Sigmoid colon (tissue), 7 donors: ENCODE measurements at regions of chr4 and their contacts with region 1.

Region 1: GRCh38 chr4:118968005-118968404 is 79.4 kb downstream of the SYNPO2 start:
- DNase-seq: peak; percentile 89
- H3K4me3 ChIP-seq: peak overlapping the region in 2 of 4 donors; percentile 2 to 23
- H3K27ac ChIP-seq: peak overlapping the region; percentile 82 to 90 (median 86)
- H3K4me1 ChIP-seq: peaks cover 0 to 99% (median 93%) of the 10 kb centered on the region in 4 donors
- H3K27me3 ChIP-seq: no peaks in the 10 kb centered on the region
- CTCF ChIP-seq: no peak
- EP300 ChIP-seq: no peak
- POLR2A ChIP-seq: no peak

Region 2: GRCh38 chr4:118676128-118676527 is 291.9 kb before region 1 on chr4:
- intact Hi-C with region 1: no loop called
- DNase-seq: no peak
- H3K4me3 ChIP-seq: no peak overlapping the region
- H3K27ac ChIP-seq: no peak overlapping the region
- H3K4me1 ChIP-seq: no peaks in the 10 kb centered on the region
- H3K27me3 ChIP-seq: no peaks in the 10 kb centered on the region
- CTCF ChIP-seq: no peak
- EP300 ChIP-seq: no peak
- POLR2A ChIP-seq: no peak

Region 3: GRCh38 chr4:118740869-118741268 is 227.1 kb before region 1 on chr4:
- intact Hi-C with region 1: loop called (anchors 2 kb)
- DNase-seq: no peak
- H3K4me3 ChIP-seq: peak overlapping the region; percentile 11 to 21 (median 16)
- H3K27ac ChIP-seq: peak overlapping the region; percentile 48 to 88 (median 85)
- H3K4me1 ChIP-seq: peaks cover 0 to 93% (median 56%) of the 10 kb centered on the region in 4 donors
- H3K27me3 ChIP-seq: no peaks in the 10 kb centered on the region
- CTCF ChIP-seq: peak in 2 of 4 experiments; percentile 20 to 47
- EP300 ChIP-seq: no peak
- POLR2A ChIP-seq: no peak

Region 4: GRCh38 chr4:118772081-118772766 is 195.8 kb before region 1 on chr4:
- intact Hi-C with region 1: loop called (anchors 2 kb)
- DNase-seq: no peak
- H3K4me3 ChIP-seq: peak overlapping the region in 3 of 4 donors; percentile 10 to 28 (median 22)
- H3K27ac ChIP-seq: peak overlapping the region; percentile 83 to 88 (median 85)
- H3K4me1 ChIP-seq: peaks cover 0 to 68% (median 51%) of the 10 kb centered on the region in 4 donors
- H3K27me3 ChIP-seq: no peaks in the 10 kb centered on the region
- CTCF ChIP-seq: peak; percentile 47 to 68 (median 64)
- EP300 ChIP-seq: no peak
- POLR2A ChIP-seq: no peak

Region 5: GRCh38 chr4:118835571-118836300 is 132.3 kb before region 1 on chr4 and contains the start of gene SEC24D:
- intact Hi-C with region 1: loop called (anchors 2 kb)
- DNase-seq: peak; percentile 95
- H3K4me3 ChIP-seq: peak within 1 kb of the TSS; percentile 83 to 93 (median 89)
- H3K27ac ChIP-seq: peak within 1 kb of the TSS; percentile 96 to 98 (median 98)
- H3K4me1 ChIP-seq: peaks cover 0 to 37% (median 26%) of the 10 kb centered on the region in 4 donors
- H3K27me3 ChIP-seq: no peaks in the 10 kb centered on the region
- CTCF ChIP-seq: no peak
- EP300 ChIP-seq: no peak
- POLR2A ChIP-seq: peak; percentile 59 to 61
- total RNA-seq, gene SEC24D: 27.6 to 42.4 (median 33.4) TPM

Region 6: DNA sequence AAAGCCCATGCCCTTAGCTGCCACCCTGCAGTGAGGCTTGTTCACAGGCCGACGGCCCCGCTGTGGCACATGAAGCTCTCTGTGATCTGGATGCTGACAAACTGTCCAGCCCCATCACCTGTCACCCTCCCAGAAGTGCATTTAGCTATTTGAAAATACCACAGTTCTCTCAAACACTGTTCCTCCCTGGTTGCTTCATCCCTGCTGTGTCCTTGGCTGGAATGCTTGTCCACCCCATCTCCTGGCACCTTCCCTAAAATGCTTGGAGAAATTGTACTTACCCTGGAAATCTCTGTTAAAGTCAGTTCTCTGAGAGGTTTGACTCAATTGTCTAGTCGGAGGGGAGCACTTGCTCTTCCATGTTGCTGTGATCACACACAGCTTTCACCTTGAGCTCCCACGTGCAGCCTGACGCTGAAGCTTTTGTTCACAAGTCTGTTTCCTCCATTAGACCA is 69.3 kb before region 1 on chr4:
- intact Hi-C with region 1: loop called (anchors 2 kb)
- DNase-seq: peak; percentile 81
- H3K4me3 ChIP-seq: peak overlapping the region in 1 of 4 donors; percentile 8
- H3K27ac ChIP-seq: peak overlapping the region; percentile 83 to 90 (median 90)
- H3K4me1 ChIP-seq: peaks cover 0 to 98% (median 67%) of the 10 kb centered on the region in 4 donors
- H3K27me3 ChIP-seq: no peaks in the 10 kb centered on the region
- CTCF ChIP-seq: no peak
- EP300 ChIP-seq: no peak
- POLR2A ChIP-seq: no peak

Region 7: DNA sequence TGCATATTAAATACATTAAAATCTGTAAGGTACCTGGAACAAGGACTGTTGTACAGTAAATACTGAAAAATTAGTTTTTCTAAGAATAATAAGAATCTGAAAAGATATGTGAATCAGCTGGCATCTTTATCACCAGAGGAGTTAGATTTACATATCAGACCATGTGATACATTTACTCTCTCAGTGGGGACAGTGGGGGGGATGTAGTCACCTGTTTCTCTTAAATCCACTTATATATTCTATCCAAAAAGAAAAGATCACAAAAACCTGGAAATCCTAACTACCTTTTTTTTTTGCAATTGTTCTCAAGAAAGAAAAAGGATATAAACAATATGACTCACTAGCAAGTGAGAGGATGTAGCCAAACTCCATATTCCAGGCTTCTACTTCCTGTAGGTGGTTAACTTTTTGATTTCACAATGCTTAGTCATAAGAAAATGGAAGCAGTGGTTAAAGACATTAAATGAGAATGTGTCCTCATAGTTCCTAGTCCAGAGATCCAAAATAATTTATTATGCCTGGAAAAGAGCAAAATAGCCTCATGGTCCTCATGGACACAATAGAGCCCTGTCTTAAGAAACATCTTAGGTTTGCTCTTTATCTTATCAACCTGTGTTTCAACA is 145.1 kb after region 1 on chr4:
- intact Hi-C with region 1: no loop called
- DNase-seq: no peak
- H3K4me3 ChIP-seq: no peak overlapping the region
- H3K27ac ChIP-seq: peak overlapping the region in 3 of 4 donors; percentile 2 to 50 (median 44)
- H3K4me1 ChIP-seq: peaks cover 0 to 5% (median 1%) of the 10 kb centered on the region in 4 donors
- H3K27me3 ChIP-seq: no peaks in the 10 kb centered on the region
- CTCF ChIP-seq: no peak
- EP300 ChIP-seq: peak in 1 of 4 donors; percentile 15
- POLR2A ChIP-seq: no peak

Region 8: GRCh38 chr4:119314356-119314755 is 346.4 kb after region 1 on chr4:
- intact Hi-C with region 1: no loop called
- DNase-seq: no peak
- H3K4me3 ChIP-seq: no peak overlapping the region
- H3K27ac ChIP-seq: no peak overlapping the region
- H3K4me1 ChIP-seq: no peaks in the 10 kb centered on the region
- H3K27me3 ChIP-seq: no peaks in the 10 kb centered on the region
- CTCF ChIP-seq: peak in 2 of 4 experiments; percentile 18 to 19
- EP300 ChIP-seq: no peak
- POLR2A ChIP-seq: no peak